Naive thymus-derived CD8-positive, alpha-beta T cell (primary cell): ENCODE measurements at regions of chr19 and their contacts with region 1.

Region 1: GRCh38 chr19:20167020-20167644 is at the start of gene ZNF486:
- DNase-seq: peak; percentile 77 to 98 (median 92)
- ATAC-seq: peak; percentile 95 to 97
- H3K4me3 Mint-ChIP-seq: peak within 1 kb of the TSS; percentile 93 to 99 (median 97)
- H3K27ac Mint-ChIP-seq: peak within 1 kb of the TSS; percentile 79 to 98 (median 93)
- H3K4me1 Mint-ChIP-seq: peaks cover 27 to 59% (median 36%) of the 10 kb centered on the region in 4 donors
- H3K27me3 Mint-ChIP-seq: no peaks in the 10 kb centered on the region
- polyA plus RNA-seq, gene ZNF486: 2.3 to 6.9 (median 4.0) TPM

Region 2: DNA sequence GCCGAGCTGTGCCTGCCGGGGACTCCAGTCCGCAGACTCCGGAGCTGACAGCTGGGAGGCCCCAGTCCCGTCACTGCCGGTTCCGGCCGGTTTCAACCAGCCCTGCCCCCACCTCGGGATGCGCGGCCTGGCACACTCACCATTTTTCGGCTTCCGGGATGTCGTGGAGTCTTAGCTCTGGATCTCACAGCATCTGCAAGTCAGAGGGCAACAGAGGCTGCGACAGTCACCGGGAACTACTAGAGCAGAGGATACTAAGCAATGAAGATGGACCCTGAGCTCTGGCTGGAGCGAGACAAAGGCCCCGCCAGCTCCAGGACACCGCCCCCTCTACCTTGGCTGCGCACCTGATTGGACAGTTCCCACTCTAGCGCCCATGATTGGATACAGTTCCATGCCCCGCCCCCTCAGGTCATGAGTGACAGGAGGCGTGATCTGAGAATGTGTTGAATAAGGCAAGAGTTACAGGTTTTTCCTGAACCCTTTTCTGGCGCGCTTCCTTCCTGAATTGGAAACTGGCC is 127.9 kb before region 1 on chr19 and contains the start of gene ZNF682:
- POLR2A ChIA-PET with region 1: interaction called, 13 read pairs
- DNase-seq: peak; percentile 86 to 98 (median 94)
- ATAC-seq: peak; percentile 98
- H3K4me3 Mint-ChIP-seq: peak within 1 kb of the TSS; percentile 90 to 99 (median 96)
- H3K27ac Mint-ChIP-seq: peak within 1 kb of the TSS; percentile 87 to 99 (median 96)
- H3K4me1 Mint-ChIP-seq: peaks cover 7 to 26% (median 20%) of the 10 kb centered on the region in 4 donors
- H3K27me3 Mint-ChIP-seq: peaks cover 0 to 4% (median 1%) of the 10 kb centered on the region in 5 donors
- polyA plus RNA-seq, gene ZNF682: 2.8 to 5.9 (median 3.4) TPM

Region 3: GRCh38 chr19:20124879-20125278 is 42.3 kb before region 1 on chr19:
- POLR2A ChIA-PET with region 1: no interaction called
- DNase-seq: no peak
- ATAC-seq: no peak
- H3K4me3 Mint-ChIP-seq: no peak overlapping the region
- H3K27ac Mint-ChIP-seq: no peak overlapping the region
- H3K4me1 Mint-ChIP-seq: no peaks in the 10 kb centered on the region
- H3K27me3 Mint-ChIP-seq: no peaks in the 10 kb centered on the region

Region 4: GRCh38 chr19:20237761-20238623 is 70.9 kb after region 1 on chr19:
- POLR2A ChIA-PET with region 1: interaction called, 13 read pairs
- DNase-seq: peak; percentile 73 to 94 (median 86)
- ATAC-seq: peak; percentile 98
- H3K4me3 Mint-ChIP-seq: peak overlapping the region; percentile 93 to 99 (median 98)
- H3K27ac Mint-ChIP-seq: peak overlapping the region; percentile 47 to 95 (median 90)
- H3K4me1 Mint-ChIP-seq: peaks cover 8 to 13% (median 12%) of the 10 kb centered on the region in 4 donors
- H3K27me3 Mint-ChIP-seq: no peaks in the 10 kb centered on the region